CD4-positive, alpha-beta T cell (primary cell): ENCODE measurements at regions of chr6 and their contacts with region 1.

Region 1: DNA sequence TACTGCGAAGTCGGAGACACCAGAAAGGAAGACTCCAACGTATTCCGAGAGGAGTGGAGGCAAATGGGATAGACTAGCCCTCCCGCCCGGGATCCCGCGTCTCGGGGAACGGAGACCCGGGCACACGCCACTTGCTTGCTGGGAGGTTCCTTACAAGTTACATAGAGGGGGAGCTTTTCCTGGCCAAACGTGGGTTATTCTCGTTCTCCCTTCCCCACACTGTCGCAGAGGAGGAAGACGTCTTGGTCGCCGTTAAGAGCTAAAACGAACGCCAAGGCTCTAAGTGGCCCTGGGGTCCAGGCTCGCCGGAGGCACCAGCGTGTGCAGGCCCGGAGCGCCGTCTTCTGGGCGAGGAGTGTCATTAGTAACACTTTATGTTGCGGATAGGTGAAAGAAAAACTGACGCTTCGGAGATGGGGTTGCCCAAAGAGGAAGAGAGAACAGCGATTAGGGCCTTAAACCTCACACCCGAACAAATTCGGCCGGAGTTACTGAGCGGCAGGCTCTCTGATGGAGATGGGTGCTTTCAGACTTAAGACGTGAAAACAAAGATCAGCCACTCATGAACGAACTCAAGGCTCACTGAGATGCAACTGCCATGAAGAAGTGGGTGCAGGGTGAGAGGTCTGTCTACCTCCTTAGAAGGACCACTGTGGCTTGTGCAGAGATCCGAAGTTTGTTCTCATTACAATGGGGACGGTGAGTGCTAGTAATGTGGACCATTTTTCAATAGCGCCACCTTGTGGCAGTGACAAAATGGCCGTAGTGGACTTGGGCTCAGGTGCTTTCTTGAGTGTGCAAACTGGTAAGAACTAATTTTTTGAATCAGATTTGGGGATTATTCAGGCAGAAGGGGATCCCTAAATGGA is 11.7 kb upstream of the ZNF311 start:
- DNase-seq: peak; percentile 71 to 91 (median 80)
- ATAC-seq: peak; percentile 66
- H3K4me3 ChIP-seq: peak overlapping the region; percentile 55
- H3K4me3 Mint-ChIP-seq: peak overlapping the region; percentile 87
- H3K27ac ChIP-seq: no peak overlapping the region
- H3K27ac Mint-ChIP-seq: peak overlapping the region; percentile 50
- H3K4me1 ChIP-seq: peaks cover 21% of the 10 kb centered on the region
- H3K4me1 Mint-ChIP-seq: peaks cover 16% of the 10 kb centered on the region
- H3K27me3 ChIP-seq: peaks cover 13 to 24% of the 10 kb centered on the region in 2 experiments
- H3K27me3 Mint-ChIP-seq: peaks cover 42% of the 10 kb centered on the region
- CTCF ChIP-seq: peak; percentile 95

Region 2: GRCh38 chr6:29589423-29590048 is 572.7 kb after region 1 on chr6:
- CTCF ChIA-PET with region 1: no interaction called
- POLR2A ChIA-PET with region 1: no interaction called
- intact Hi-C with region 1: loop called in 1 of 2 experiments (anchors 2 kb)
- DNase-seq: peak; percentile 28 to 77 (median 39)
- ATAC-seq: peak; percentile 85
- H3K4me3 ChIP-seq: no peak overlapping the region
- H3K4me3 Mint-ChIP-seq: no peak overlapping the region
- H3K27ac ChIP-seq: no peak overlapping the region
- H3K27ac Mint-ChIP-seq: no peak overlapping the region
- H3K4me1 ChIP-seq: no peaks in the 10 kb centered on the region
- H3K4me1 Mint-ChIP-seq: no peaks in the 10 kb centered on the region
- H3K27me3 ChIP-seq: peaks cover 3 to 11% of the 10 kb centered on the region in 2 experiments
- H3K27me3 Mint-ChIP-seq: peaks cover 33% of the 10 kb centered on the region
- CTCF ChIP-seq: peak; percentile 99